Activated naive CD4-positive, alpha-beta T cell treated with anti-CD3 and anti-CD28 coated beads for 36 hours (primary cell): ENCODE measurements at regions of chr12 and their contacts with region 1.

Region 1: DNA sequence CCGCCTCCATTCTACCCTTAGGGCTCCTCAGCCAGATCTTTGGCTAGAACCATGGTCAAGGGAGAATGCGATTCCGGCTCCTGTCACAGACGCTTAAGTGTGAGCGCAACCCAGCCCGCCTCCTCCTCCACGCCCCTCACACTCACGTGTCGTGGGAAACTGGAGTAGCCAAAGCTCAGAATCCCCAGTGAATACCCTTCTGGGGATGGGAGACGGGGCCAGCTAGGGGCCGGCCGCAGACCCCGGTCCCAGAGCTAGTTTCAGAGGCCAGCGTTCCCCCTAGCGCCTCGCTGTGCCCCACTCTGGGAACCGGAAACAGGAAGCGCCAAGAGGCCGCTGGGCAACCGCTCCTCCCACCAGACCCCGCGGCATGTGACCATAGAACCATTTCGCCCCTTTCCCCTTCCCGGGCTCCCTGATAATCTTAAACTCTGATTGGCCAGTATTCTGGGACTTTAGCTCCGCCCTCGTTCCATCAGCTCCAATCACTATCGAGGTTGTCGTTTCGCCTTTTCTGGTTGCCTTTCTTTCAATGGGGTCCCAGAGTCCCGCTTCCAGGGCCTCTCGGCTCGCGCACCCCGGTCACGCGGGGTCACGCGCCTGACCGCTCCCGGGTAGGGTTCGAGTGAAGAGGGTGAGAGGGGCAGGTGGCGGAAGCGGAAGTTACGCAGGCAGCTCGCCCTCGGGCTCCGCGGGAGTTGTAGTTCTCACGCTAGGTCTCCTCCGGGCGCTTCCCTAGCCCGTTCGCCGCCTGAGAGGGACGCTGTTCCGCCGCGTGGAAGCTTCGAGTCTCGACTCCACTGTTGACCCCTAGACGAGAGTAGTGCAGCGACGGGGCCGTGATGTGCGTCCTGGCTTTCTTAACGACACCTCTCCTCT is at the start of gene M6PR:
- DNase-seq: peak; percentile 95
- H3K4me3 Mint-ChIP-seq: peak within 1 kb of the TSS; percentile 99
- H3K27ac Mint-ChIP-seq: peak within 1 kb of the TSS; percentile 96
- H3K4me1 Mint-ChIP-seq: peaks cover 56% of the 10 kb centered on the region
- H3K27me3 Mint-ChIP-seq: no peaks in the 10 kb centered on the region
- total RNA-seq, gene M6PR: 139 to 140 TPM

Region 2: GRCh38 chr12:8796831-8797626 is 152.6 kb before region 1 on chr12:
- CTCF ChIA-PET with region 1: no interaction called
- intact Hi-C with region 1: no loop called
- DNase-seq: no peak
- H3K4me3 Mint-ChIP-seq: no peak overlapping the region
- H3K27ac Mint-ChIP-seq: no peak overlapping the region
- H3K4me1 Mint-ChIP-seq: no peaks in the 10 kb centered on the region
- H3K27me3 Mint-ChIP-seq: no peaks in the 10 kb centered on the region

Region 3: GRCh38 chr12:8914716-8915526 is 34.7 kb before region 1 on chr12:
- CTCF ChIA-PET with region 1: interaction called, 6 read pairs
- intact Hi-C with region 1: loop called (anchors 1 kb)
- DNase-seq: peak; percentile 61
- H3K4me3 Mint-ChIP-seq: no peak overlapping the region
- H3K27ac Mint-ChIP-seq: no peak overlapping the region
- H3K4me1 Mint-ChIP-seq: peaks cover 15% of the 10 kb centered on the region
- H3K27me3 Mint-ChIP-seq: no peaks in the 10 kb centered on the region

Region 4: DNA sequence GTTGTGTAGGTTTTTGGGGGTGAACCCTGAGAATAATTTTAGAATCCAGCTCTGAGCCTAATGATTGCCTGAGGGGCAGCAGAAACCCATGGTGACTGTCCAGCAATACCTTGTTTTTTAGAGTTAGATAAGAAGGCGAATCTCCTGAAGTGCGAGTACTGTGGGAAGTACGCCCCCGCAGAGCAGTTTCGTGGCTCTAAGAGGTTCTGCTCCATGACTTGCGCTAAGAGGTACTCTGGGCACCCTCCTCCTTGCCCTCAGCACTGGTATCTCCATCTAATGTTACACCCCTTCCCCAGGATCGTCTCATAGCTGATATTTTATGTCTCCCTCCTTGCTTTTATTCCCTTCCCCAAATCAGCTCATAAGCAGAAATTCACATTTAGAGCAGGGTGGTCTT is 12.8 kb before region 1 on chr12:
- CTCF ChIA-PET with region 1: no interaction called
- intact Hi-C with region 1: no loop called
- DNase-seq: no peak
- H3K4me3 Mint-ChIP-seq: no peak overlapping the region
- H3K27ac Mint-ChIP-seq: no peak overlapping the region
- H3K4me1 Mint-ChIP-seq: no peaks in the 10 kb centered on the region
- H3K27me3 Mint-ChIP-seq: no peaks in the 10 kb centered on the region

Region 5: DNA sequence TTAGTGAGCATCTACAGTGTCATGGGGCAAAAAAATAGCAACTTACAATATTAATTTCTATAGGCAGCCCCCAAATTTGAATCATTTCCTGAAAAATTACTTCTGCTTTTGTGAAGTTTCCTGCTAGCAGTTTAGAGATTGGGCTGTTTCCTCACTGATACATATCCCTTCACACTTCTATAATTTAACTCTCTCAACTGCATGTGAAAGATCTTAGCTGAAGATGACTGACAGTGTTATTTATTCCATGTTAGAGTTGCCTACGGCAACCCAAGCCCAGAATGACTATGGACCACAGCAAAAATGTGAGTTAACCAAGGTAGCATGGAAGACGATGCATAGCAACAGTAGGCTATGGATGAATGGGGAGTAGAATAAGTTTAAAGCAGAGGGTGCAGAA is 39.8 kb after region 1 on chr12 and contains the start of gene KLRG1:
- CTCF ChIA-PET with region 1: interaction called, 5 read pairs
- intact Hi-C with region 1: loop called (anchors 1 kb)
- DNase-seq: peak; percentile 55
- H3K4me3 Mint-ChIP-seq: peak within 1 kb of the TSS; percentile 53
- H3K27ac Mint-ChIP-seq: peak within 1 kb of the TSS; percentile 43
- H3K4me1 Mint-ChIP-seq: peaks cover 61% of the 10 kb centered on the region
- H3K27me3 Mint-ChIP-seq: no peaks in the 10 kb centered on the region
- total RNA-seq, gene KLRG1: 3.9 to 5.2 TPM

Region 6: GRCh38 chr12:9027161-9028059 is 77.8 kb after region 1 on chr12:
- CTCF ChIA-PET with region 1: interaction called, 34 read pairs
- intact Hi-C with region 1: loop called (anchors 1 kb)
- DNase-seq: peak; percentile 28
- H3K4me3 Mint-ChIP-seq: peak overlapping the region; percentile 6
- H3K27ac Mint-ChIP-seq: peak overlapping the region; percentile 69
- H3K4me1 Mint-ChIP-seq: peaks cover 50% of the 10 kb centered on the region
- H3K27me3 Mint-ChIP-seq: no peaks in the 10 kb centered on the region

Region 7: GRCh38 chr12:9039397-9039977 is 89.9 kb after region 1 on chr12:
- CTCF ChIA-PET with region 1: interaction called, 191 read pairs
- intact Hi-C with region 1: loop called (anchors 1 kb)
- DNase-seq: no peak
- H3K4me3 Mint-ChIP-seq: no peak overlapping the region
- H3K27ac Mint-ChIP-seq: no peak overlapping the region
- H3K4me1 Mint-ChIP-seq: peaks cover 42% of the 10 kb centered on the region
- H3K27me3 Mint-ChIP-seq: no peaks in the 10 kb centered on the region

Region 8: GRCh38 chr12:9276990-9277389 is 327.4 kb after region 1 on chr12:
- CTCF ChIA-PET with region 1: no interaction called
- intact Hi-C with region 1: loop called (anchors 5 kb)
- DNase-seq: no peak
- H3K4me3 Mint-ChIP-seq: no peak overlapping the region
- H3K27ac Mint-ChIP-seq: no peak overlapping the region
- H3K4me1 Mint-ChIP-seq: no peaks in the 10 kb centered on the region
- H3K27me3 Mint-ChIP-seq: no peaks in the 10 kb centered on the region